ENCODE measurements at regions of chr5 and their contacts with region 1.

Region 1: GRCh38 chr5:151384106-151384505 is 36.7 kb upstream of the SLC36A2 start:
- DNase-seq: no peak
- ATAC-seq: peak; percentile 18 to 53 (median 43)
- H3K4me3 ChIP-seq: peak overlapping the region; percentile 37
- H3K27ac ChIP-seq: peak overlapping the region; percentile 91
- H3K4me1 ChIP-seq: peaks cover 18% of the 10 kb centered on the region
- H3K27me3 ChIP-seq: no peaks in the 10 kb centered on the region
- CTCF ChIP-seq: no peak

Region 2: DNA sequence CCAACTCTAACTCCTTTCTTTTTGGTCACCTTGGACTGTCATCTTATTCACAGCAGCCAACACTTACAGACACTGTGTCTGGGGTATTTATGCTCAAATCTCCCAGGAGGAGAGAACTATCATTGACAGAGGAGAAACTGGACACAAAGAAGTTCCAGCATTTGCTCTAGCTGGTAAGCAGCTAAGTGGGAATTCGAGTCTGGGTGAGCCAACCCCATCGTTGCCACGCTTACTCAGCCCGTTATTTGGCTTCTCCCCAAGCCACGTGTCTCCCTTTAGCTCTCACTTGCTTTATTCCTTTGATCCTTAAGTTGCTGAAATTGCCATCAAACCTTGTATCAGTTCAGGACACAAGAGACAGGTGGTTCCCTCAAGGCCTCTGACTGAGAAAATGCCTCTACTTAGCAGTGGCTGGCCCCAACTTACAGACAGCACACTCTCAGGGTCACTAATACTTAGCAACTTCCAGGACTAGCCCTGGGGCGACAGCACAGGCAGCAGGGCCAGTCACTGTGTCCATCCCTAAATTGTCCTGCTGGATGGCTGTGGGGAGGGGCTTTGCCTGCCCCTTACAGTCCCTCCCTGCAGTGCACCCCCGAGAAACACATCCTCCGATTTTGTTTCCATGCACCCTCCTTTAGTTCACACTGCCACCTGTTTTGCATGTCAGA is 38.2 kb before region 1 on chr5:
- intact Hi-C with region 1: loop called (anchors 2 to 5 kb)
- DNase-seq: peak; percentile 31 to 71
- ATAC-seq: peak; percentile 72 to 81 (median 77)
- H3K4me3 ChIP-seq: peak overlapping the region; percentile 69
- H3K27ac ChIP-seq: peak overlapping the region; percentile 91
- H3K4me1 ChIP-seq: peaks cover 30% of the 10 kb centered on the region
- H3K27me3 ChIP-seq: no peaks in the 10 kb centered on the region
- CTCF ChIP-seq: no peak

Region 3: GRCh38 chr5:151432210-151432609 is 48.1 kb after region 1 on chr5:
- intact Hi-C with region 1: loop called in 1 of 2 experiments (anchors 2 kb)
- DNase-seq: no peak
- ATAC-seq: no peak
- H3K4me3 ChIP-seq: peak overlapping the region; percentile 47
- H3K27ac ChIP-seq: peak overlapping the region; percentile 88
- H3K4me1 ChIP-seq: peaks cover 26% of the 10 kb centered on the region
- H3K27me3 ChIP-seq: no peaks in the 10 kb centered on the region
- CTCF ChIP-seq: no peak

Region 4: GRCh38 chr5:151492729-151493128 is 108.6 kb after region 1 on chr5:
- intact Hi-C with region 1: loop called in 1 of 2 experiments (anchors 10 kb)
- DNase-seq: no peak
- ATAC-seq: peak in 3 of 4 donors; percentile 23 to 46 (median 36)
- H3K4me3 ChIP-seq: no peak overlapping the region
- H3K27ac ChIP-seq: no peak overlapping the region
- H3K4me1 ChIP-seq: peaks cover 16% of the 10 kb centered on the region
- H3K27me3 ChIP-seq: no peaks in the 10 kb centered on the region
- CTCF ChIP-seq: no peak

Region 5: DNA sequence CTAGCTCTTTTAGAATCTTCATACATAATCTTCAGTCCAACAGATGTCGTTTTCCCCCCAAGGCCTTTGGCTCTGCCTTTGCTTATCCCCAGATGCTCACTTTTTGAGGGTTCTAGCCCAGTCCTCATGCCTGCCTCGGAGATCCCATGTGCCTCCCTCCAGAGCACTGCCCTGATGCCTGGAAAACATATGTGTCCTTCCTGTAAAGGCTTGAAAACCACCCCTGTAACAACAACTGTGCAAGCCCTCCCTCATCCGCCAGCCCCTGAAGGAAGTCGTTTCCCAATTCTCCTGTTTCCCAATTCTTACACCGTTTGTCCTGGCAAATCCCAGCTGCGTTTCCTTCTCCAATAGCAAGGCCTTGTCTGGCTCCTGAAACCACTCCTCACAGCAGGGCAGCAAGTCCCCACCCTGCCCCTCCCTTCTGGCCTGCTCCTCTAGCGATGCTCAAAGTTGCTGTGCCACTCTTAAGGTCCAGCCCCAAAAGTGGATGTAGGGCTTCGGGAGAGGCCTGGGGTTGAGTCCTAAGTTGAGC is 115.5 kb after region 1 on chr5:
- intact Hi-C with region 1: loop called (anchors 5 to 10 kb)
- DNase-seq: no peak
- ATAC-seq: peak in 3 of 4 donors; percentile 33 to 34 (median 33)
- H3K4me3 ChIP-seq: no peak overlapping the region
- H3K27ac ChIP-seq: no peak overlapping the region
- H3K4me1 ChIP-seq: no peaks in the 10 kb centered on the region
- H3K27me3 ChIP-seq: no peaks in the 10 kb centered on the region
- CTCF ChIP-seq: no peak